ENCODE measurements at regions of chr3 and their contacts with region 1.

Region 1: DNA sequence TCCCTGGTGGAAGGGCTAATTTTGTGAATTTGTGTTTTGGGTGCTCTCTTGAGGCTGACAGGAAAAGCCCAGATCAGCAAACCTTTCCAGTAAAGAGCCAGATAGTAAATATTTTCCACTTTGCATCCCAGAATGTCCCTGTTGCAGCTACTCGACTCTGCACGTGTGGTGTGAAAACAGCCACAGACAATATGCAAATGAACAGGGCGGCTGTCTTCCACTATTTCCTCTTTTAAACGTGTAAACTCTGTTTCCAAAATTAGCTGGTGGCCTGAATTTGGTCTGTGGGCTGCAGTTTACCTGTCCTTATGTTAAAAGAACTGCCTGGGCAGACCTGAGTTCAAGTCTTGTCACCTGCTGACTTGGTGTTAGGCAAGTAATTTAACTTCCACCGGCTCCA is 202.7 kb downstream of the EDEM1 start:
- DNase-seq: no peak
- ATAC-seq: no peak
- H3K4me3 ChIP-seq: no peak overlapping the region
- H3K4me3 Mint-ChIP-seq: no peak overlapping the region
- H3K27ac ChIP-seq: no peak overlapping the region
- H3K27ac Mint-ChIP-seq: no peak overlapping the region
- H3K4me1 ChIP-seq: no peaks in the 10 kb centered on the region
- H3K4me1 Mint-ChIP-seq: peaks cover 0 to 6% (median 0%) of the 10 kb centered on the region in 3 donors
- H3K27me3 ChIP-seq: no peaks in the 10 kb centered on the region
- H3K27me3 Mint-ChIP-seq: peaks cover 10 to 37% of the 10 kb centered on the region in 2 donors

Region 2: GRCh38 chr3:5426094-5426883 is 36.1 kb after region 1 on chr3:
- CTCF ChIA-PET with region 1: no interaction called
- POLR2A ChIA-PET with region 1: interaction called in 1 of 2 experiments, 11 read pairs
- DNase-seq: peak in 30 of 35 experiments; percentile 3 to 58 (median 30)
- ATAC-seq: peak in 3 of 4 experiments; percentile 47 to 52 (median 50)
- H3K4me3 ChIP-seq: no peak overlapping the region
- H3K4me3 Mint-ChIP-seq: no peak overlapping the region
- H3K27ac ChIP-seq: no peak overlapping the region
- H3K27ac Mint-ChIP-seq: no peak overlapping the region
- H3K4me1 ChIP-seq: peaks cover 0 to 3% of the 10 kb centered on the region in 2 experiments
- H3K4me1 Mint-ChIP-seq: peaks cover 2 to 13% (median 7%) of the 10 kb centered on the region in 3 donors
- H3K27me3 ChIP-seq: peaks cover 0 to 3% of the 10 kb centered on the region in 2 experiments
- H3K27me3 Mint-ChIP-seq: peaks cover 5 to 8% of the 10 kb centered on the region in 2 donors

Region 3: DNA sequence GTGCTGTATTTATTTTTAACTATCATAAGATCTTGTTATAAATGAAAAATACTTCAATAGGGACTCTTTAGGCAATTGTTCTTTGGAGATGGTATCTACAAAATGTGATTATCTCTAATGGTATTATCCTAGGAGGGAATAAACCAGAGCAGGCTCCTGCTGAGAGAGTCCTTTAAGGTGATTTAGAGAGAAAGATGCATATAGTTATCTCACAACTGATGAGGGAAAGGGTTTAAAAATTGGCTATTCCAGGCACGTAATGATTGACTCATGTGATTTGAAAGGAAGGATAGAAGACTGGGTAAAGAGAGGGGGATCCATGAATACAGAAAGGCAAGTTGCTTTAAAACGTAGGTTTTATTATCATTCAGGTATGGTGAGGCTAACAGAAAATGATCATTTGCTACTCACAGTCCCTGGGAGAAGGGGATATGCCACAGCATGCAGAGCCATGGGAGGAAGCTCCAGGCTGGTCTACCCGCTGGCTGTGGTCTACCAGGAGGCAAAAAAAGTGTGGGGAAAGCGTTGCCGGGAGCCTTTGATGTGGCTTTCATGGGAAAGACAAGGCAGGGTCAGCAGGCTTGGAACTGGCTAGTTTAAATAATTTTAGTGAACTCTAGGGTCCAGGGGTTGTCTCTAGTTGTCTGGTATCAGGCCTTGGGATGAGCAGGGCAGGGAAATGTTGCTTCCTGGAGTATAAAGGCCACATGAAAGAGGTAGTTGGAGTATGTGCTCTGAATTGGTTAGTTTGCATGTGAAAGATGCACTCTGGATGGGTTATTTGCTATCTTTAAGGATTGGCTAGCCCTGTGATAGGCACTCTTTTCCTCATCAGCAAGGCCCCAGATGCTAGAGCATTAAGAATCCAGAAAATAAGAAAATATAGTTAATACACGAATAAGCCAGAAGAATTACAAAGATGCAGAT is 672.3 kb after region 1 on chr3:
- CTCF ChIA-PET with region 1: no interaction called
- POLR2A ChIA-PET with region 1: no interaction called
- DNase-seq: no peak
- ATAC-seq: no peak
- H3K4me3 ChIP-seq: no peak overlapping the region
- H3K4me3 Mint-ChIP-seq: no peak overlapping the region
- H3K27ac ChIP-seq: no peak overlapping the region
- H3K27ac Mint-ChIP-seq: no peak overlapping the region
- H3K4me1 ChIP-seq: no peaks in the 10 kb centered on the region
- H3K4me1 Mint-ChIP-seq: no peaks in the 10 kb centered on the region
- H3K27me3 ChIP-seq: no peaks in the 10 kb centered on the region
- H3K27me3 Mint-ChIP-seq: no peaks in the 10 kb centered on the region